ENCODE measurements at regions of chr5 and their contacts with region 1.

Region 1: DNA sequence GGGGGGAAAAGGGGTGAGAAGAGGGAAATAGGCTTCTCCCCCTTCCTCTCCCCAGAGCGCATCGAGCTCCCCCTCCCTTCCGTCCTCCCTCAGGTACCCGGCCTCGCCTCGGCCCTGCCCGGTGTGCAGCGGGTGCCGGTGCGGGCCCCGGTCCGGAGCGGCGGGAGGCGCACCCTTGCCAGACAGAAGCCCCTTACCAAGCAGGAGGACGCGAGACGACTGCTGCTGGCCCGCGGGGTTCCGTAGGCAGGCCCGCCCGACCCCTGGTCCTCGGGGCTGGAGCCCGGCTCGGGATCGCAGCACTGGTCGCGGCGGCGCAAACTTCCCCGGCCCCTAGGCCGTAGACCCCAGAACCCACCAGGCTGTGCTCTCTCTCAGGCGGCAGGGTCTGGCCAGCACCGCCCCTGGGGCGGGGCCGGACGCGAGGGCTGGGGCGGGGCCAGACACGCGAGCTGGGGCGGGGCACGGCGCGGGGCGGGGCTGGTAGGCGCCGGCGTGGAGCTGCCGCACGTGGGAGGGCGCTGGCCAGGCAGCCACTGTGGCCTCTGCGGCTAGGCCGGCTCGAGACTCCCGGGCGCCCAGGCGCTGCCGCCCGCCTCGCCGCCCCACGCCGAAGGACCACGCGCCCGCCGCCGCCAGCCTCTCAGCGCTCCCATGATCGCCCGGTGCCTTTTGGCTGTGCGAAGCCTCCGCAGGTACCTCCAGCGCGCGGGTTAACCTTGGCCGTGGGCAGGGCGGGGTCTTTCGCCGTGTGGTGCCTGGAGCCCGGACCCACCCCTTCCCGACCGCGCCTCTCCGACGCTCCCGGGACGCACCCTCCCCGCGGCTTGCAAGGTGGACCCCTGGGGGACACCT is at the starts of genes NLN and SGTB:
- DNase-seq: peak; percentile 88
- H3K4me3 ChIP-seq: peak within 1 kb of the TSS; percentile 96 to 99 (median 98)
- H3K27ac ChIP-seq: peak within 1 kb of the TSS; percentile 70
- H3K4me1 ChIP-seq: peaks cover 23% of the 10 kb centered on the region
- H3K27me3 ChIP-seq: no peaks in the 10 kb centered on the region
- CTCF ChIP-seq: no peak
- POLR2A ChIP-seq: peak; percentile 37
- total RNA-seq, gene NLN: 62.8 and 63.3 TPM in 2 replicates
- total RNA-seq, gene SGTB: 14.1 and 16.4 TPM in 2 replicates

Region 2: GRCh38 chr5:65570598-65571226 is 151.2 kb before region 1 on chr5:
- CTCF ChIA-PET with region 1: no interaction called
- POLR2A ChIA-PET with region 1: no interaction called
- dilution Hi-C with region 1: no loop called
- intact Hi-C with region 1: no loop called
- DNase-seq: no peak
- H3K4me3 ChIP-seq: no peak overlapping the region
- H3K27ac ChIP-seq: no peak overlapping the region
- H3K4me1 ChIP-seq: no peaks in the 10 kb centered on the region
- H3K27me3 ChIP-seq: no peaks in the 10 kb centered on the region
- CTCF ChIP-seq: no peak
- POLR2A ChIP-seq: no peak

Region 3: DNA sequence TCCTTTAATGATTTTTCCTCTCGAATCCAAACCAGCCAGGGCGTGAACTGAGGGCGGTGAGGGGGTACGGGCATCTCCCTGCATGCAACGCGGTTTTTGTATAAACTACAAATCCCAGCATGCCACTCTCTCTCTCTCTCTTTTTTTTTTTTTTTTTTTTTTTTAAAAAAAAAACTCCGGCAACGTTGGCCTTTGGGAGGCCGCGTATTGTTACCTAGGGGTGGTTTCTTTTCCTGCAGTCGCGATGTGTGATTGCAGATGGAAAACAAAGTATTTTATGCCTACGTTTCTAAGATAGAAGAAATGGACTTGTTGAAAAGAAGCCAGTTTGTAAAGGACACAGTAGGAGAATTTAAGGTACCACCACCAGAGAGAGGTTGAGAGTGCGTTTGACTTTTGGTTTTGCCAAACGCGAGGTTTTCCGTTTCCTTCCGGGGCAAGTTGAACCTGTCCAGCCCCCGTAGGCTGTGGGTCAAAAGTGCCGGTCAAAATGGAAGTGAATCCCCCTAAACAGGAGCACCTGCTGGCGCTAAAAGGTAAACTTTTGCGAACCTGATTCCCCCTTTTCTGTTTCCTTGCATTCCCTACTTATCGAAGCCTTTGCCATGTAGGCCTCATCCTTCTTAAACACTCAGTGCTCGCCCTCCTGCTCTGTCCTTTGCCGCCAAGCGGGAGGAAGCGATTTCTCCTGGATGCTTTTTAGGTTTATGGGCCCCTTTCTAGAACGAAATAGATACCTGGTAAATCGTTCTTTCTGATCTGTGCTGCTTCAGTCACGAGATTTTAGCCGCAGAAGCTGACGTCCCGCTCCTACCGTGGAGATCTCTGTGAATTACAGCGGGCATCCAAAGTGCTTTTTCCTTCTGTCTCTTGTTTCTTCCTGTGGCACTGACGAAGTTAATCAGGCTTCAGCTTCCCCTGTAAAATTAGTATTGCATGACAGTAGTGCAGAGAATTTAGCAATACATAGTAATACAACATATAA is 97.1 kb before region 1 on chr5 and contains the starts of genes SHLD3 and TRAPPC13:
- CTCF ChIA-PET with region 1: interaction called, 5 read pairs
- POLR2A ChIA-PET with region 1: no interaction called
- dilution Hi-C with region 1: no loop called
- intact Hi-C with region 1: loop called (anchors 2 kb)
- DNase-seq: peak; percentile 92
- H3K4me3 ChIP-seq: peak within 1 kb of the TSS; percentile 76 to 97 (median 92)
- H3K27ac ChIP-seq: peak within 1 kb of the TSS; percentile 84
- H3K4me1 ChIP-seq: peaks cover 19% of the 10 kb centered on the region
- H3K27me3 ChIP-seq: no peaks in the 10 kb centered on the region
- CTCF ChIP-seq: no peak
- POLR2A ChIP-seq: peak; percentile 56
- total RNA-seq, gene SHLD3: 3.6 TPM in 2 replicates
- total RNA-seq, gene TRAPPC13: 16.4 and 24.0 TPM in 2 replicates

Region 4: GRCh38 chr5:65699338-65699737 is 22.6 kb before region 1 on chr5:
- CTCF ChIA-PET with region 1: no interaction called
- POLR2A ChIA-PET with region 1: no interaction called
- dilution Hi-C with region 1: no loop called
- intact Hi-C with region 1: no loop called
- DNase-seq: no peak
- H3K4me3 ChIP-seq: no peak overlapping the region
- H3K27ac ChIP-seq: no peak overlapping the region
- H3K4me1 ChIP-seq: no peaks in the 10 kb centered on the region
- H3K27me3 ChIP-seq: no peaks in the 10 kb centered on the region
- CTCF ChIP-seq: no peak
- POLR2A ChIP-seq: no peak

Region 5: DNA sequence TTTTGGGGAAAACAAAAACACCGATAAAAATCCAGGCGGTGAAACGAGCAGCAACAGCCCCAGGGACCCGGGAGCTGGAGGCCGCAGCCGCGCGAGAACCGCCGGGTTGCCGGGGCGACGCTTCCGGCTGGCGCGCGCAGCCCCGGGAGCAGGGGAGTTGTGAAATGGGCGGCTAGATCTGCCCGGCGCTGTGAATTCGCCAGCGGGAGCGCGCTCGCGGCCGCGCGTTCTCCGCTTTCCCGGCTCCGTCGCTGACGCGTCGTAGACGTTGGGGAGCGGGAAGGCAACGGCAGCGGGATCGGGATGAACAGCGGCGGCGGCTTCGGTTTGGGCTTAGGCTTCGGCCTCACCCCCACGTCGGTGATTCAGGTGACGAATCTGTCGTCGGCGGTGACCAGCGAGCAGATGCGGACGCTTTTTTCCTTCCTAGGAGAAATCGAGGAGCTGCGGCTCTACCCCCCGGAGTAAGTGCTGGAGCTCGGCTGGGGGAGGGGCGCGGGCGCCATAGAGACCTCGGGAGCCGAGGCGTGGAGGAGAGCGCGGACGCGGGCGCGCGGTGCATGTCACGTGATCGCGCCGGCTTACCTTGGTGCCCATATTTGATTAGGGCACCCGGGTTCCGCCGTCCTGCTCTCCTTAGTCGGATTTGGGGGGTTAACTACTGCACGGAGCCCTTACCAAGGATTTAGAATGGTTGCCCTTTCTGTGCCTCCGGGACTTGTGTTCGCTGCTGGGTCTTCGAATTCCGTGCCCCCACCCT is 422.3 kb after region 1 on chr5 and contains the start of gene SREK1:
- CTCF ChIA-PET with region 1: no interaction called
- POLR2A ChIA-PET with region 1: no interaction called
- dilution Hi-C with region 1: no loop called
- intact Hi-C with region 1: loop called (anchors 10 kb)
- DNase-seq: peak; percentile 95
- H3K4me3 ChIP-seq: peak within 1 kb of the TSS; percentile 74 to 98 (median 77)
- H3K27ac ChIP-seq: peak within 1 kb of the TSS; percentile 93
- H3K4me1 ChIP-seq: peaks cover 16% of the 10 kb centered on the region
- H3K27me3 ChIP-seq: peaks cover 2 to 6% of the 10 kb centered on the region in 2 experiments
- CTCF ChIP-seq: no peak
- POLR2A ChIP-seq: peak; percentile 86
- total RNA-seq, gene SREK1: 72.9 and 78.6 TPM in 2 replicates

Measured in endothelial cell of umbilical vein (primary cell).